Adrenal gland (tissue), 19 donors: ENCODE measurements at regions of chr11 and their contacts with region 1.

Region 1: DNA sequence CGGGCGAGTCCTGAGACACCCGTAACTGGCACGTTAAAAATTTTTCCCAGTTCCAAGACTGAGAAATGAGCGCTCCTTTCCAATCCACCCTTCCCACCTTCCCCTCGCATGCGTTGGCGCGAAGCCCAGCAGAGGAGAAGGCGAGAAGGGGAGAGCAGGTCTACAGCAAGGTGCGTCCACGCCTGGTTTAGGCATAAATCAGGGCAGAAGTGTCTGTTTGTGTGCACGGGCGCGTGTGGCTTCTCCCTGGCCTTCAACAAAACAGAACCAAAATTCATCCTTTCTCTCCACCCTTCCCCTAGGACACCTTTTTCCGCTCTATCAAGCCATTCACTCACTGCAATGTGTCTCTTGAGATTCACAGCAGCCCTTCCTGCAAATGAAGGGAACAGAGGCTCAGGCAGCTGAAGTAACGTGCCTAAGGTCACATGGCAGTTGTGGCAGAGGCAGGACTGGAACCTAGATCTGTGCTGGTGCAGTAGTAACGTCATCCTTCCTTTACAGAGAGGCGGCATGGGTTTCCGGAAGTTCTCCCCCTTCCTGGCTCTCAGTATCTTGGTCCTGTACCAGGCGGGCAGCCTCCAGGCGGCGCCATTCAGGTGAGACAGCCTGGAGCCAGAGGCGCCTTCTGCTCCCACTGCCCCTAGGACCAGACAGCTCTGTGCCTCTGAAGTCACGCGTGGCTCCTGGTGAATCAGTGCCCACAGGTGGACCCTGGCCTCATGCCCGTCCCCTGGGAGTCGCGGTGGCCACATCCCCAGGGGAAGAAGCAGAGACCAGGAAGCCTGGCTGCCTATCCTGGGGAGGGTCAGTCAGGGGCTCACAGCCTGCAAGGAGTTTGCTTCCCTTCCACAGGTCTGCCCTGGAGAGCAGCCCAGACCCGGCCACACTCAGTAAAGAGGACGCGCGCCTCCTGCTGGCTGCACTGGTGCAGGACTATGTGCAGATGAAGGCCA is 1.1 kb downstream of the CALCB start:
- DNase-seq: peak; percentile 68 to 90 (median 79)
- H3K4me3 ChIP-seq: no peak overlapping the region
- H3K27ac ChIP-seq: no peak overlapping the region
- H3K4me1 ChIP-seq: peaks cover 0 to 14% of the 10 kb centered on the region in 2 donors
- H3K27me3 ChIP-seq: peaks cover 31% of the 10 kb centered on the region
- CTCF ChIP-seq: peak; percentile 50 to 64 (median 60)
- POLR2A ChIP-seq: no peak

Region 2: GRCh38 chr11:14789879-14790484 is 284.5 kb before region 1 on chr11:
- intact Hi-C with region 1: loop called in 1 of 2 experiments (anchors 10 kb)
- DNase-seq: no peak
- H3K4me3 ChIP-seq: no peak overlapping the region
- H3K27ac ChIP-seq: no peak overlapping the region
- H3K4me1 ChIP-seq: no peaks in the 10 kb centered on the region
- H3K27me3 ChIP-seq: no peaks in the 10 kb centered on the region
- CTCF ChIP-seq: peak in 4 of 6 experiments; percentile 27 to 59 (median 54)
- POLR2A ChIP-seq: no peak

Region 3: DNA sequence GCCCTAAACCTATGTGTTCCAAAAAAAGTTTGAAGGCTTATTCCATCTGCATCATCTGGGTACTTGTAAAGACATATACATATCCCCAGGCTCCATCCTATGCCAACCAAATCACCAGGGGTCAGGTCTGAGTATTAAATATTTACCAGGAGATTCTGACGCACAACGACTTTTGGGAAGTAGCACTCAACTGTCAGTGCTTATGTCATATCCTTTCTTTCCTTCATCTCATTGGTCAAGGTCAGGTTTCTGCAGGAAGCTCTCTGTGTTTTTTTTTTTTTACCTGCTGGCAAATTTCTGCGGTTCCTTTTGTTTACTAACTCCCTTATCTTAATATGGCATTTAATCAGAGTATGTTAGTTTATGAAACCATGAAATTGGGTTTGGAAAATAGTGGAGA is 159.9 kb before region 1 on chr11:
- intact Hi-C with region 1: loop called in 1 of 2 experiments (anchors 10 kb)
- DNase-seq: no peak
- H3K4me3 ChIP-seq: no peak overlapping the region
- H3K27ac ChIP-seq: no peak overlapping the region
- H3K4me1 ChIP-seq: no peaks in the 10 kb centered on the region
- H3K27me3 ChIP-seq: no peaks in the 10 kb centered on the region
- CTCF ChIP-seq: no peak
- POLR2A ChIP-seq: no peak

Region 4: GRCh38 chr11:15266993-15267392 is 192.5 kb after region 1 on chr11:
- intact Hi-C with region 1: no loop called
- DNase-seq: no peak
- H3K4me3 ChIP-seq: no peak overlapping the region
- H3K27ac ChIP-seq: no peak overlapping the region
- H3K4me1 ChIP-seq: no peaks in the 10 kb centered on the region
- H3K27me3 ChIP-seq: no peaks in the 10 kb centered on the region
- CTCF ChIP-seq: no peak
- POLR2A ChIP-seq: no peak